B cell (primary cell): ENCODE measurements at regions of chr5 and their contacts with region 1.

Region 1: GRCh38 chr5:95554647-95555548 is at the starts of genes ARSK and SKIC3:
- DNase-seq: peak; percentile 99
- ATAC-seq: peak; percentile 85
- H3K4me3 ChIP-seq: peak within 1 kb of the TSS; percentile 70 to 91 (median 81)
- H3K4me3 Mint-ChIP-seq: peak within 1 kb of the TSS; percentile 93
- H3K27ac ChIP-seq: peak within 1 kb of the TSS; percentile 71 to 80
- H3K27ac Mint-ChIP-seq: peak within 1 kb of the TSS; percentile 90
- H3K4me1 ChIP-seq: peaks cover 14 to 20% of the 10 kb centered on the region in 2 donors
- H3K4me1 Mint-ChIP-seq: peaks cover 41% of the 10 kb centered on the region
- H3K27me3 ChIP-seq: no peaks in the 10 kb centered on the region
- H3K27me3 Mint-ChIP-seq: no peaks in the 10 kb centered on the region
- CTCF ChIP-seq: peak; percentile 29
- total RNA-seq, gene ARSK: 5.1 and 5.5 TPM in 2 replicates
- total RNA-seq, gene SKIC3: 75.4 and 85.3 TPM in 2 replicates

Region 2: DNA sequence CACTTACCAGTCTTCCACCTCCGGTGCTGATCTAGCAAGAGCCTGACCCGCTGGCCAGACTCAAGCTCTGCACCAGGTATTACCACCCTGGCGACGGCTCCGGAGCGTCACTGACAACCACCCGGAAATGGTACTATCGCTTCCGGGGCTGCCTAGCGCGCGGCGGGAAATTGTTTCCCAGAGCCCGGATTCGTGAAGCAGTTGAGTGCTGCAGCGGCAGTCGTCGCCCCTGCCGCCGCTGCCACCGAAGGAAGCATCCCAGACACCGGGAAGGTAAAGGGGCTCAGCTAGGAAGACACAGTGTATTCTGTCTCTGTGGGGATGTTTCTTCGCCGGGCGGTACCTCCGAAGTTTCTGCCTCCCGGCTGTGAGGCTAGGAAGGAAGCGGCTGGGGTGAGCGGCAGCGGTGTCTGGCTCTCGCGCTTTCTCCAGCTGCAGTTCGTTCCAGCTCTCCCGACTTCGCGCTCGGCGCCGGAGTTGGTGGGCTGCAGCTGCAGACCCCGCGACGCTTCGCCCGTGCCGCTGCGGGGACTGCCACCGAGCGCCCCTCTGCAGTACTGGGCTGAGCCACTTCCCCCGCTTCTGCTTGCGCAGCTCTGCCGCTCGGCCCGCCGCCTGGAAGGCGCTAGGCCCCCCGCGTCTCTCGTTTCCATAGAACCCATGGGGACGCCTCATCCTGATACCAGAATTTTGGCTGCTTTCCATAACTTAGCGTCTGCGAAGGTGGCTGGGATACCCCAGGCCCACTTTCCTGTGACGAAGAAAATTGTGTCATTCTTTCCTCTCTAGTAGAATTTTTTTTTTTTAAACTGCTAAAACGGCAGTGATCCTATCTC is 936.2 kb before region 1 on chr5 and contains the starts of genes KIAA0825 and SLF1:
- CTCF ChIA-PET with region 1: no interaction called
- POLR2A ChIA-PET with region 1: no interaction called
- intact Hi-C with region 1: loop called (anchors 10 kb)
- DNase-seq: peak; percentile 85
- ATAC-seq: peak; percentile 95
- H3K4me3 ChIP-seq: peak within 1 kb of the TSS; percentile 73 to 96 (median 90)
- H3K4me3 Mint-ChIP-seq: peak within 1 kb of the TSS; percentile 96
- H3K27ac ChIP-seq: peak within 1 kb of the TSS; percentile 22 to 64
- H3K27ac Mint-ChIP-seq: peak within 1 kb of the TSS; percentile 92
- H3K4me1 ChIP-seq: peaks cover 18% of the 10 kb centered on the region in 2 donors
- H3K4me1 Mint-ChIP-seq: peaks cover 22% of the 10 kb centered on the region
- H3K27me3 ChIP-seq: no peaks in the 10 kb centered on the region
- H3K27me3 Mint-ChIP-seq: no peaks in the 10 kb centered on the region
- CTCF ChIP-seq: no peak
- total RNA-seq, gene KIAA0825: 2.7 and 3.0 TPM in 2 replicates
- total RNA-seq, gene SLF1: 12.5 and 15.2 TPM in 2 replicates

Region 3: DNA sequence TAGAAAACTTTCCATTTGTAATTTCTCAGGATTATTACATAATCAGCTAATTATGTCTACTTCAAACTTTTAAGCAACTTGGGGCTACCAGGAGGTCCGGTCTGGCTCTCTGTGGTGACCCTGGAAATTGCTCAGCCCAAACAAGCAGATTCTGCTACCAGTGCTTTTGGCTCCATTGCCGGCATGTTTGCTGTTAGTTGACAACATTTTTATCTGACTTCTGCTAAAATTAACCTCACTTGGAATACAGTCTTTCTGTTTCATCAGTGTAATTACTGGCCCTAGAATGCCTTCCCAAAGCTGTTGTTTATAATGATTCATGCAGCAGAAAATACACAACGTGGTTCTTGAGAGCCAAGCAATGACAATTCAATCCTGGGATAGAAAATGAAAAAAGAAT is 202.2 kb before region 1 on chr5:
- CTCF ChIA-PET with region 1: no interaction called
- POLR2A ChIA-PET with region 1: no interaction called
- intact Hi-C with region 1: no loop called
- DNase-seq: no peak
- ATAC-seq: no peak
- H3K4me3 ChIP-seq: no peak overlapping the region
- H3K4me3 Mint-ChIP-seq: no peak overlapping the region
- H3K27ac ChIP-seq: no peak overlapping the region
- H3K27ac Mint-ChIP-seq: no peak overlapping the region
- H3K4me1 ChIP-seq: no peaks in the 10 kb centered on the region
- H3K4me1 Mint-ChIP-seq: no peaks in the 10 kb centered on the region
- H3K27me3 ChIP-seq: no peaks in the 10 kb centered on the region
- H3K27me3 Mint-ChIP-seq: no peaks in the 10 kb centered on the region
- CTCF ChIP-seq: no peak

Region 4: DNA sequence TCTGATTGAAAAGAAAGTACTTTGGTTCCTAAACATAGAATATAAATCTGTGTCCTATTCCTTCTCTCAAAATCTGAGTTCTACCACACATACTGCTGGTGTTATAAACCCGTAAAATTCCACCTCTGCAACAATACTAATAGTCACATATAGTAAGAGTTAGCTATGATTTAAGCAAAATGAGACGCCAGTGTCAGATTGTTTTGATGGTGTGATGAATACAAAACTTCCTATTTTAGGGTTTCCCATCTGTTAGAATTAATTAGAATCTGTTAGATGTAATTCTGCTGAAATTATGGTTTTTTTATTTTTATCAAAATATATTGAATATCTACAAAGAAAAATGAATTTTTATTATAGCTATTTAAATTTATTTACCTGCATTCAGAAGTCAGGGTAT is 26.7 kb after region 1 on chr5:
- CTCF ChIA-PET with region 1: no interaction called
- POLR2A ChIA-PET with region 1: no interaction called
- intact Hi-C with region 1: no loop called
- DNase-seq: no peak
- ATAC-seq: no peak
- H3K4me3 ChIP-seq: no peak overlapping the region
- H3K4me3 Mint-ChIP-seq: no peak overlapping the region
- H3K27ac ChIP-seq: no peak overlapping the region
- H3K27ac Mint-ChIP-seq: no peak overlapping the region
- H3K4me1 ChIP-seq: no peaks in the 10 kb centered on the region
- H3K4me1 Mint-ChIP-seq: no peaks in the 10 kb centered on the region
- H3K27me3 ChIP-seq: no peaks in the 10 kb centered on the region
- H3K27me3 Mint-ChIP-seq: no peaks in the 10 kb centered on the region
- CTCF ChIP-seq: no peak

Region 5: GRCh38 chr5:95620030-95620869 is 65.4 kb after region 1 on chr5 and contains the start of gene GPR150:
- CTCF ChIA-PET with region 1: no interaction called
- POLR2A ChIA-PET with region 1: interaction called, 3 read pairs
- intact Hi-C with region 1: loop called (anchors 1 kb)
- DNase-seq: peak; percentile 78
- ATAC-seq: peak; percentile 79
- H3K4me3 ChIP-seq: peak within 1 kb of the TSS; percentile 58 to 82 (median 70)
- H3K4me3 Mint-ChIP-seq: peak within 1 kb of the TSS; percentile 90
- H3K27ac ChIP-seq: no peak within 1 kb of the TSS
- H3K27ac Mint-ChIP-seq: peak within 1 kb of the TSS; percentile 74
- H3K4me1 ChIP-seq: peaks cover 23 to 26% of the 10 kb centered on the region in 2 donors
- H3K4me1 Mint-ChIP-seq: peaks cover 26% of the 10 kb centered on the region
- H3K27me3 ChIP-seq: peaks cover 0 to 7% (median 0%) of the 10 kb centered on the region in 4 experiments
- H3K27me3 Mint-ChIP-seq: no peaks in the 10 kb centered on the region
- CTCF ChIP-seq: no peak
- total RNA-seq, gene GPR150: 0.27 and 0.34 TPM in 2 replicates

Region 6: DNA sequence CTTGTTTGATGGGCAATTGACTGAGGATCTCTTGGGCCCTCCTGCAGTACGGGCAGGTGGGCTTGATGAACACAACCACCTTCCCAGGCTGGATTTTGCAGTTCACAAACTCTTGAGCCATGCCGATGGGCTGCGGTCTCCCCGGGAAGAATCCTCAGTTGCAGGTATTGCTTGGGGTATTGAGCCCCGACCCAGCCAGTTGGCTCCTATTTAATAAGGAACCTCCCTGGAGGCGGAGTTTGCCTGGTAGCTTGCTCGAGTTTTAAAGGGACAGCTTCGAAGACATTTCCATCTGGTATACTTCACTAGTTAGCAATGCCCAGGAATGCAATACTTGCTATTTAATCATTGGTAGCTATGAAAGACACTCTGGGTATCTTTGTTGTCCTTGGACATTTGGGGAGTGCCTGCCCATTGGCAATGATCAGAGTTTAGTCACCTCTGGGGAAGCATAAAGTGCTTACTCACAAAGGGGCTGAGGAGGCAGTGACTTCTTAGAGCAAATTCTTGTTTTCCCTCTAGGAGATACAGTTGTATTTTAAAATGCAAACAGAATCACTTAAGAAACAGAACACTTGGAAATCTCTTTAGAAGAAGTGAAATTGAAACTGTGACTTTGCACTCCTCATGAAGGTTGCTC is 267.8 kb after region 1 on chr5 and contains the start of gene GLRX:
- CTCF ChIA-PET with region 1: no interaction called
- POLR2A ChIA-PET with region 1: no interaction called
- intact Hi-C with region 1: loop called (anchors 2 kb)
- DNase-seq: peak; percentile 63
- ATAC-seq: peak; percentile 41
- H3K4me3 ChIP-seq: peak within 1 kb of the TSS; percentile 70 to 100 (median 97)
- H3K4me3 Mint-ChIP-seq: peak within 1 kb of the TSS; percentile 99
- H3K27ac ChIP-seq: peak within 1 kb of the TSS; percentile 67 to 90
- H3K27ac Mint-ChIP-seq: peak within 1 kb of the TSS; percentile 99
- H3K4me1 ChIP-seq: peaks cover 52 to 59% of the 10 kb centered on the region in 2 donors
- H3K4me1 Mint-ChIP-seq: peaks cover 70% of the 10 kb centered on the region
- H3K27me3 ChIP-seq: no peaks in the 10 kb centered on the region
- H3K27me3 Mint-ChIP-seq: no peaks in the 10 kb centered on the region
- CTCF ChIP-seq: no peak
- total RNA-seq, gene GLRX: 44.6 and 50.0 TPM in 2 replicates

Region 7: DNA sequence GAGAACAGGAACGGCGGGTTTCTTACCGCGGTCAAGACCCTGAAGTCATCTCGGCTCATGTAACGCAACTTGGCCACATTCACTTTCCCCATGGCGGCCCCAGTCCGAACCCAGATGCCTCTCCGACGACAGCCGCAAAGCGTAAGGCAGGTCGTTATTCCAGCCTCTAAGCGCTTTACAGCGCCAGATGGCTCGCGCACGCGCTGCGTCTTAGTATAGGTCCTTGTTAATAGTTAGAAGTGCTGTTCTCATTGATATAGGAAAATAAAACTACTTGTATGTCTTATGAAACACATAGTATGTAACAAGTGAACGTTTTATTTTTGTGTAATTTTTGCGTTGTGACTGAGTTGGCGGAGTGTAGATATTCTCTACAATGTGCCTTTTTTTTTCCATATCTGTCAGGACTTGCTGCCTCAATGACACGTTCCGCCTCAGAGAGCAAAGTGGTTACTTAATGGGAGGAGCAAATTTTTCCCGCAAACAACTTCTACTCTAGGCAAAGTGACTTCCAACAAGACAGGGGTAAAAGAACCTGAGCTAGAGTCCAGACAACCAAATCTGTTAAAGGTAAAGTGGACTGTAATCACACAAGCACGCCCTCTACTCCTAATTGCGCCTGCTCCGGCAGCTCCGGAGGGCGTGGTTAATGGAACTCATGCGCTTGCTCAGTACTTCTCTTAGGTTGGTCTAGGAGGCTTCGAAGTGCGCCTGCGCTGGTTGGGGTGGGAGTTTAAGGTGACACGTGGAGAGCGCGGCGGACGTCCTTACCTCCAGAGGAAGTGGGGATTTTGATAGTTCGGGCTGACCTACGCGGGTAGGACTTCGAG is 1628.4 kb after region 1 on chr5 and contains the start of gene RIOK2:
- CTCF ChIA-PET with region 1: no interaction called
- POLR2A ChIA-PET with region 1: no interaction called
- intact Hi-C with region 1: loop called (anchors 1 kb)
- DNase-seq: peak; percentile 93
- ATAC-seq: peak; percentile 87
- H3K4me3 ChIP-seq: peak within 1 kb of the TSS; percentile 68 to 96 (median 88)
- H3K4me3 Mint-ChIP-seq: peak within 1 kb of the TSS; percentile 97
- H3K27ac ChIP-seq: peak within 1 kb of the TSS; percentile 91 to 99
- H3K27ac Mint-ChIP-seq: peak within 1 kb of the TSS; percentile 100
- H3K4me1 ChIP-seq: peaks cover 12 to 15% of the 10 kb centered on the region in 2 donors
- H3K4me1 Mint-ChIP-seq: peaks cover 33% of the 10 kb centered on the region
- H3K27me3 ChIP-seq: no peaks in the 10 kb centered on the region
- H3K27me3 Mint-ChIP-seq: no peaks in the 10 kb centered on the region
- CTCF ChIP-seq: no peak
- total RNA-seq, gene RIOK2: 32.8 and 37.2 TPM in 2 replicates